ENCODE measurements at regions of chr3 and their contacts with region 1.

Region 1: GRCh38 chr3:87260270-87260669 is 16.1 kb downstream of the POU1F1 start:
- DNase-seq: peak; percentile 66
- H3K4me3 Mint-ChIP-seq: no peak overlapping the region
- H3K27ac Mint-ChIP-seq: no peak overlapping the region
- H3K4me1 Mint-ChIP-seq: no peaks in the 10 kb centered on the region
- H3K27me3 Mint-ChIP-seq: no peaks in the 10 kb centered on the region

Region 2: DNA sequence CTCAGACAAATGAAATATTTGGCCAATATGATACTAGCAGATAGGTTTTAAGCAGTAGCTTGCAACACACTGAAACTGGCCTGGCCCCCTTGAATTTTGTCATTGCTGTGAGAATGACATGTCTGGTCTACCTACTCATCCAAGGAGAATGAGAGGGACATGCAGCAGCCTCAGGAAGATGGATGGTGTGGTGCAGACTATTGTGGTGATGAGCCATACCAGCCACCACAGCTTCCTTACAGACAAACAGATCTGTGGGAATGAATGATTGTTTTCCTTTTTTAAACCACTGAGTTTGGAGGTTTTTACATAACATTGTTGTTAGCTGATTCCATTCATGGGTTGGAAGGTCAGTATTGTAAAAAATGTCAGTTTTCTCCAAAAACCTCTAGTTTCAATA is 149.8 kb after region 1 on chr3:
- CTCF ChIA-PET with region 1: no interaction called
- intact Hi-C with region 1: no loop called
- DNase-seq: no peak
- H3K4me3 Mint-ChIP-seq: no peak overlapping the region
- H3K27ac Mint-ChIP-seq: no peak overlapping the region
- H3K4me1 Mint-ChIP-seq: no peaks in the 10 kb centered on the region
- H3K27me3 Mint-ChIP-seq: no peaks in the 10 kb centered on the region

Region 3: GRCh38 chr3:87503900-87504508 is 243.7 kb after region 1 on chr3:
- CTCF ChIA-PET with region 1: interaction called, 7 read pairs
- intact Hi-C with region 1: loop called (anchors 1 kb)
- DNase-seq: peak; percentile 22
- H3K4me3 Mint-ChIP-seq: no peak overlapping the region
- H3K27ac Mint-ChIP-seq: no peak overlapping the region
- H3K4me1 Mint-ChIP-seq: no peaks in the 10 kb centered on the region
- H3K27me3 Mint-ChIP-seq: no peaks in the 10 kb centered on the region

Region 4: DNA sequence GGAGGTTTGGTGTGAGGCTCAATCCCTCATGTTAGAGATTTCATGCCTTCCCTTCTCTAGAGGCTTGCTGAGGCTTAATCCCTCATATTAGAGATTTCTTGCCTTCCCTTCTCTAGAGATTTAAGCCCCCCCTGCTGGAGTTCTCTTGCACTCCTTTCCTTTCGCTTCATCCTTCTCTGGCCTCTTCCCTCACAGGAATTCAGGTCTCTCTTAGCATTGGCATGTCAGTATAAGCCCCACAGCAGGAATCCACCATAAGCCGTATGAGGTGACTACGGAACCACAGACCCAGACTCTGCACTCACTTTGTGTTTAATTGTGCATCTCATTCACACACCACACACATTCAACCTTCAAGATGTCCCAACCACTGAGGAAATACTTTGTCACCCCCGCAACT is 354.7 kb after region 1 on chr3:
- CTCF ChIA-PET with region 1: no interaction called
- intact Hi-C with region 1: loop called (anchors 10 kb)
- DNase-seq: no peak
- H3K4me3 Mint-ChIP-seq: no peak overlapping the region
- H3K27ac Mint-ChIP-seq: no peak overlapping the region
- H3K4me1 Mint-ChIP-seq: no peaks in the 10 kb centered on the region
- H3K27me3 Mint-ChIP-seq: no peaks in the 10 kb centered on the region